ENCODE measurements at regions of chr7 and their contacts with region 1.

Region 1: DNA sequence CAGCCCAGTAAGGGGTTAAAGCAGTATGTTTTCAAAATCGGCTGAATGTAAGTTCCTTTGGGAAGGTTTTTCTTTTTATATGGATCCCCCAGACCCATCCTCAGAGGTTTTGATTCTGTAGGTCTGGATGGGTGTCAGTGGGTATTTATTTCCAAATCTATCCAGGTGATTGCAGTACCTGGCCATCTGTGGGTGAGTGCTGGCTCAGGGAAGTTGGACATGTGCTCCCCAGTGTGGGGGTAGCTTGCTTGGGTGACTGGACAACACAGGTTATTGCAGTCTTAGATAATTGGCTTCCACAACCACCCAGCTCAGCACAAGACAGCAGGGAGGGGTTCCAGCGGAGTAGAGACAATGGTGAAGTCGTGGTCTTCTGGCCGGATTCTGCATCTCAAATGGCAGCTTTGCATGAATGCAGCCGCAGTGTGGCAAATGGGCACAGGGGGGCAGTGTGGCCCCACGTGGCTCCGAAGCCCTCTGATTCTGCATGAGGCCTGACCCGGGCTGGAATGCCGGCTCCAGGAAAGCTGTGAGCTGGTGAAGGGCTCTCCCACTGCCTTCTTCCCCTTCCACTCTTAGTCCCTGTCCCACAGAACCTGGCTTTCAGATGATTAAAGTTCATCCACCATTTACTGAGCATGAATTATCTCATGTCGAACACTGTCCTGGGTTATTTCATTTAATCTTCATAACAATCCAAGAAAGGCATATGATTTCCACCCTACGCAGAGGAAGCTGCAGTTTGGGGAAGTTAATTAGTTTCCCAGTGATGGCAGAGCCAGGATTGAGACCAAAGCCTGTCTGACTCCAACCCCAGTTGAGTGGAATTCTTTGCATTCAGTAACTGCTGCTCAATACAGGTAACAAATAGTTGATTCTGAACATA is 64.5 kb upstream of the SYPL1 start:
- DNase-seq: peak; percentile 85
- H3K4me3 ChIP-seq: no peak overlapping the region
- H3K27ac ChIP-seq: no peak overlapping the region
- H3K4me1 ChIP-seq: peaks cover 0 to 8% (median 3%) of the 10 kb centered on the region in 4 donors
- H3K27me3 ChIP-seq: no peaks in the 10 kb centered on the region
- CTCF ChIP-seq: peak; percentile 94 to 96 (median 94)
- EP300 ChIP-seq: no peak
- POLR2A ChIP-seq: no peak

Region 2: GRCh38 chr7:106461993-106462859 is 285.6 kb after region 1 on chr7:
- in situ Hi-C with region 1: loop called (anchors 5 to 10 kb)
- intact Hi-C with region 1: loop called (anchors 2 kb)
- DNase-seq: no peak
- H3K4me3 ChIP-seq: no peak overlapping the region
- H3K27ac ChIP-seq: no peak overlapping the region
- H3K4me1 ChIP-seq: peaks cover 0 to 6% (median 0%) of the 10 kb centered on the region in 4 donors
- H3K27me3 ChIP-seq: no peaks in the 10 kb centered on the region
- CTCF ChIP-seq: peak; percentile 61 to 78 (median 65)
- EP300 ChIP-seq: no peak
- POLR2A ChIP-seq: no peak

Region 3: DNA sequence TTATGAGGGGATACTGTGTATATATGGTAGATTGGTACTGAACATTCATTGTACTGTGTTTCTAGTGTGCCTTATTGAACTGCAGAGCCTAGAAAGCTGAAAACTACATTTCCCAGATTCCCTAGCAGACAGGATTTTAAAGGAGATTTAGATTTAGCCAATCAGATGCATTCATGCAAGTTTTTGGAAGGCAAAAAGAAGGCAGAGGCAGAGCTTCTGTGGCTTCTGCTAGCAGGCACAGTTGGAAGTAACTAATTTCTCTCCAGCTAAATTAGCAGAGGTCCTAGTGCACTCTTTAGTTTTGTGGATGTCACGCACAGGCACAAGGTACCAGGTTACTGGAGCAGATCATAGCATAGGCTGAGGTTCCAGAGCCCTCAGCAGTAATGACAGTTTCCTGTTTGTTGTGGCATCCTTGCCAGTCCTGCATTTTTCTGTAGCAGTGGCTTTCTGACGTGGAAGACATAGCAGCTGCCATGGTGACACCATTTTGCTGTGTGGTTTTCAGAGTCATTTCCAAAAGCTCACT is 568.0 kb after region 1 on chr7:
- in situ Hi-C with region 1: loop called in 2 of 4 experiments (anchors 10 to 25 kb)
- intact Hi-C with region 1: no loop called
- DNase-seq: no peak
- H3K4me3 ChIP-seq: no peak overlapping the region
- H3K27ac ChIP-seq: no peak overlapping the region
- H3K4me1 ChIP-seq: peaks cover 3 to 19% (median 11%) of the 10 kb centered on the region in 4 donors
- H3K27me3 ChIP-seq: no peaks in the 10 kb centered on the region
- CTCF ChIP-seq: no peak
- EP300 ChIP-seq: no peak
- POLR2A ChIP-seq: no peak

Measured in transverse colon (tissue), 4 donors.